CD8-positive, alpha-beta T cell (primary cell): ENCODE measurements at regions of chr10 and their contacts with region 1.

Region 1: GRCh38 chr10:110137142-110137545 is 70.3 kb upstream of the MXI1 start:
- DNase-seq: peak in 2 of 9 experiments; percentile 67 to 79
- ATAC-seq: peak; percentile 74
- H3K4me3 ChIP-seq: no peak overlapping the region
- H3K4me3 Mint-ChIP-seq: no peak overlapping the region
- H3K27ac ChIP-seq: peak overlapping the region in 1 of 2 experiments; percentile 2
- H3K27ac Mint-ChIP-seq: peak overlapping the region; percentile 23
- H3K4me1 ChIP-seq: peaks cover 9% of the 10 kb centered on the region
- H3K4me1 Mint-ChIP-seq: peaks cover 21% of the 10 kb centered on the region
- H3K27me3 ChIP-seq: no peaks in the 10 kb centered on the region
- H3K27me3 Mint-ChIP-seq: no peaks in the 10 kb centered on the region
- CTCF ChIP-seq: peak; percentile 97

Region 2: GRCh38 chr10:109624939-109625338 is 512.2 kb before region 1 on chr10:
- CTCF ChIA-PET with region 1: no interaction called
- POLR2A ChIA-PET with region 1: no interaction called
- intact Hi-C with region 1: no loop called
- DNase-seq: no peak
- ATAC-seq: no peak
- H3K4me3 ChIP-seq: no peak overlapping the region
- H3K4me3 Mint-ChIP-seq: no peak overlapping the region
- H3K27ac ChIP-seq: no peak overlapping the region
- H3K27ac Mint-ChIP-seq: no peak overlapping the region
- H3K4me1 ChIP-seq: no peaks in the 10 kb centered on the region
- H3K4me1 Mint-ChIP-seq: no peaks in the 10 kb centered on the region
- H3K27me3 ChIP-seq: no peaks in the 10 kb centered on the region
- H3K27me3 Mint-ChIP-seq: no peaks in the 10 kb centered on the region
- CTCF ChIP-seq: no peak

Region 3: DNA sequence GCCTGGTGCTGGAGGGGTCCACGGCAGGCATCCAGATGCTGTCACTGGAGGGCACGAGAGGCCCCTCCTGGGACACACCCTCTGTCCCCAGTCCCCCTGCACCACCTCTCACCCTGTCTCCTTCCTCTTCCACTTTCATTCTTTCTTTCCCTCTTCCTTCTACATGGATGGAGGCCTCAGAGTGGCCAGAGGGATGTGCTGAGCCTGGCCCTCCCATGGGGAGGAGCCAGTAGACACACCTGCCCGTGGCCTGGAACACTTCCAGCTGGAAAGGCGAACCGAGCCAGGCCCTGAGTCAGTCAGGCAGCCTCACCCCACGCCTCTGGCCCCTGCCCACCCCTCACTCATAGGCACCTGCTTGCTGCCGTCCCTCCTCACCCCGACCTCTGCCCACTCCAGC is 14.3 kb after region 1 on chr10:
- CTCF ChIA-PET with region 1: interaction called, 14 read pairs
- POLR2A ChIA-PET with region 1: no interaction called
- intact Hi-C with region 1: loop called in 1 of 2 experiments (anchors 2 kb)
- DNase-seq: peak in 1 of 9 experiments; percentile 44
- ATAC-seq: no peak
- H3K4me3 ChIP-seq: no peak overlapping the region
- H3K4me3 Mint-ChIP-seq: no peak overlapping the region
- H3K27ac ChIP-seq: no peak overlapping the region
- H3K27ac Mint-ChIP-seq: no peak overlapping the region
- H3K4me1 ChIP-seq: peaks cover 7% of the 10 kb centered on the region
- H3K4me1 Mint-ChIP-seq: peaks cover 8% of the 10 kb centered on the region
- H3K27me3 ChIP-seq: peaks cover 41 to 51% of the 10 kb centered on the region in 2 experiments
- H3K27me3 Mint-ChIP-seq: peaks cover 74% of the 10 kb centered on the region
- CTCF ChIP-seq: no peak

Region 4: GRCh38 chr10:110210674-110211464 is 73.7 kb after region 1 on chr10:
- CTCF ChIA-PET with region 1: interaction called, 19 read pairs
- POLR2A ChIA-PET with region 1: interaction called, 10 read pairs
- intact Hi-C with region 1: loop called (anchors 1 kb)
- DNase-seq: peak; percentile 77 to 94 (median 90)
- ATAC-seq: peak; percentile 48
- H3K4me3 ChIP-seq: peak overlapping the region; percentile 59 to 91
- H3K4me3 Mint-ChIP-seq: peak overlapping the region; percentile 94
- H3K27ac ChIP-seq: peak overlapping the region; percentile 60 to 90
- H3K27ac Mint-ChIP-seq: peak overlapping the region; percentile 99
- H3K4me1 ChIP-seq: peaks cover 22% of the 10 kb centered on the region
- H3K4me1 Mint-ChIP-seq: peaks cover 47% of the 10 kb centered on the region
- H3K27me3 ChIP-seq: peaks cover 0 to 13% of the 10 kb centered on the region in 2 experiments
- H3K27me3 Mint-ChIP-seq: peaks cover 17% of the 10 kb centered on the region
- CTCF ChIP-seq: no peak

Region 5: GRCh38 chr10:110354322-110354766 is 217.2 kb after region 1 on chr10:
- CTCF ChIA-PET with region 1: no interaction called
- POLR2A ChIA-PET with region 1: no interaction called
- intact Hi-C with region 1: no loop called
- DNase-seq: peak; percentile 54 to 84 (median 75)
- ATAC-seq: no peak
- H3K4me3 ChIP-seq: no peak overlapping the region
- H3K4me3 Mint-ChIP-seq: no peak overlapping the region
- H3K27ac ChIP-seq: no peak overlapping the region
- H3K27ac Mint-ChIP-seq: no peak overlapping the region
- H3K4me1 ChIP-seq: peaks cover 9% of the 10 kb centered on the region
- H3K4me1 Mint-ChIP-seq: peaks cover 48% of the 10 kb centered on the region
- H3K27me3 ChIP-seq: no peaks in the 10 kb centered on the region
- H3K27me3 Mint-ChIP-seq: no peaks in the 10 kb centered on the region
- CTCF ChIP-seq: peak; percentile 63

Region 6: GRCh38 chr10:110414563-110415309 is 277.6 kb after region 1 on chr10:
- CTCF ChIA-PET with region 1: no interaction called
- POLR2A ChIA-PET with region 1: no interaction called
- intact Hi-C with region 1: loop called in 1 of 2 experiments (anchors 2 kb)
- DNase-seq: peak; percentile 66 to 97 (median 86)
- ATAC-seq: peak; percentile 95
- H3K4me3 ChIP-seq: no peak overlapping the region
- H3K4me3 Mint-ChIP-seq: peak overlapping the region; percentile 33
- H3K27ac ChIP-seq: peak overlapping the region in 1 of 2 experiments; percentile 38
- H3K27ac Mint-ChIP-seq: peak overlapping the region; percentile 82
- H3K4me1 ChIP-seq: peaks cover 26% of the 10 kb centered on the region
- H3K4me1 Mint-ChIP-seq: peaks cover 29% of the 10 kb centered on the region
- H3K27me3 ChIP-seq: no peaks in the 10 kb centered on the region
- H3K27me3 Mint-ChIP-seq: peaks cover 2% of the 10 kb centered on the region
- CTCF ChIP-seq: no peak

Region 7: DNA sequence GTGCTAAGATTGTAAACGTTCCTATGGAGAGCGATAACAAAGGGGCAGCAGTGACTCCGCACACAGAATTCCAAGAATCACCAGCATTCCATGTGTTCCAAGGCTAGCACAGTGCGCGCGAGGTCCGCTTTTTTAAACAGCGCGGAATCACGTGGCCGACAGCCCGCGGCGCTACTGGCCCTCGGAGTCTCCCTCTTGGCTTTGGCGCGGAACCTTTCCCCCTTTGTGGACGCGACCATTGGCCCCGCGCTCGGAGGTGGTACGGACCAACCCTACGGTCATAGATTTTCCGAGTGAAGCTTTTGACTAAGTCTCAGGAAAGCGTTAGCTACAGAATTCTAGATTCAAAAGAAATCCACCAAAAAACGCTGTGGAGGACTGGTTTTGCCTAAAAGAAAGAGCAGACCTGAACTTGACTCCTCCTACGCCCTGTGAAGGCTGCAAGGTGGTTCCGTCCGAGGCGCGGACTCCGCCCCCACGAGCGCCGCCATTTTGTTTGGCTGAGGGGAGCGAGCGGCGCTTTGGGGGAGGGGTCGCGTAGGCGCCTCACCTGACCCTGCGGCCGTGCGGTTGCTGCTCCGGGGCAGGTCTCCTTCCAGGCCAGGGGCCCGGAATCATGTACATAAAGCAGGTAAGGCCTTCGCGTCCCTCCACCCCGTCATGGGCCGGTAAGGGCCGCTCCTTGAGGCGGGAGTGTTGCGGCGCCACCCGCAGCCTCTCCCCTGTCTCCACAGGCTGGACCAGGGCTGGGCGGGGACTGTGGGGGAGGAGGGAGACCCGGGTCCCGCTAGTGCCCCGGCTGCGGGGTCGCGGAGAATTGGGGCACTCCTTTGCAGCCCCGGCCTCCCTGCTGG is 430.3 kb after region 1 on chr10 and contains the start of gene SMC3:
- CTCF ChIA-PET with region 1: interaction called, 3 read pairs
- POLR2A ChIA-PET with region 1: no interaction called
- intact Hi-C with region 1: loop called in 1 of 2 experiments (anchors 5 kb)
- DNase-seq: peak; percentile 83 to 95 (median 90)
- ATAC-seq: peak; percentile 89
- H3K4me3 ChIP-seq: peak within 1 kb of the TSS; percentile 92 to 93
- H3K4me3 Mint-ChIP-seq: peak within 1 kb of the TSS; percentile 97
- H3K27ac ChIP-seq: peak within 1 kb of the TSS; percentile 85 to 86
- H3K27ac Mint-ChIP-seq: peak within 1 kb of the TSS; percentile 96
- H3K4me1 ChIP-seq: peaks cover 44% of the 10 kb centered on the region
- H3K4me1 Mint-ChIP-seq: peaks cover 44% of the 10 kb centered on the region
- H3K27me3 ChIP-seq: no peaks in the 10 kb centered on the region
- H3K27me3 Mint-ChIP-seq: peaks cover 12% of the 10 kb centered on the region
- CTCF ChIP-seq: no peak
- total RNA-seq, gene SMC3: 35.1 to 37.9 TPM